Calu3 (cell line): ENCODE measurements at regions of chrX and their contacts with region 1.

Region 1: DNA sequence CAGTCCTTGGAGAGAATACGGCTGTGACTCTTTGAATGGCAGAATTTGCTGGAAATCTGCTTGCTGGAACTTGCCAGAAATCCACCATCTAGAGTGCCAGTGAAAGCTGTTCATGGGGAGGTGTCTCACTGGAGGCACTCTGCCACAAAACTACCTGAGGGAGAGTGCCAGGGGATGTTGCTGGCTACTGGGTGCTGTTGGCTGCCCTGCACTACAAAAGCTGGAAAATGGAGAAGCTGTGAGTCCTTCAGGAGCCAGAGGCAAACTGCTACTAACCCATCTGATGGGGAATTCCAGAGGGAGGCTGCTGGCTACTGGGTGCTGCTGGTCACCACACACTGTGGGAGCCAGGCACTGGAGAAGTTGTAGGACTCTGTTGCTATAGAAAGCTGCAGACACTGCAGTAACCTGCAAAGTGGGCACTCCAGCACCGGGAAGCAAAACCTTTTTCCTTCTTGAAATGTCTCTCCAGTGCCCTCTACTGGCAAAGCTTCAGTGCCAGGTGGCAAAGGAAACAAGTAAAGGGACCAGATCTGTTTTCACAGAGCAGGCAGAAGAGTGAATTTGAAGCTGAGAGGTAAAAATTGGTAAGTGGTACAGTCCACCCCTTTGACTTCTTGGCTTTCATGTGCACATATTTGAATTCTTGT is 47.8 kb upstream of the HSD17B10 start:
- DNase-seq: peak; percentile 68
- H3K4me3 Mint-ChIP-seq: no peak overlapping the region
- H3K27ac Mint-ChIP-seq: no peak overlapping the region
- H3K4me1 Mint-ChIP-seq: peaks cover 11% of the 10 kb centered on the region
- H3K27me3 Mint-ChIP-seq: peaks cover 31% of the 10 kb centered on the region
- CTCF ChIP-seq: no peak

Region 2: DNA sequence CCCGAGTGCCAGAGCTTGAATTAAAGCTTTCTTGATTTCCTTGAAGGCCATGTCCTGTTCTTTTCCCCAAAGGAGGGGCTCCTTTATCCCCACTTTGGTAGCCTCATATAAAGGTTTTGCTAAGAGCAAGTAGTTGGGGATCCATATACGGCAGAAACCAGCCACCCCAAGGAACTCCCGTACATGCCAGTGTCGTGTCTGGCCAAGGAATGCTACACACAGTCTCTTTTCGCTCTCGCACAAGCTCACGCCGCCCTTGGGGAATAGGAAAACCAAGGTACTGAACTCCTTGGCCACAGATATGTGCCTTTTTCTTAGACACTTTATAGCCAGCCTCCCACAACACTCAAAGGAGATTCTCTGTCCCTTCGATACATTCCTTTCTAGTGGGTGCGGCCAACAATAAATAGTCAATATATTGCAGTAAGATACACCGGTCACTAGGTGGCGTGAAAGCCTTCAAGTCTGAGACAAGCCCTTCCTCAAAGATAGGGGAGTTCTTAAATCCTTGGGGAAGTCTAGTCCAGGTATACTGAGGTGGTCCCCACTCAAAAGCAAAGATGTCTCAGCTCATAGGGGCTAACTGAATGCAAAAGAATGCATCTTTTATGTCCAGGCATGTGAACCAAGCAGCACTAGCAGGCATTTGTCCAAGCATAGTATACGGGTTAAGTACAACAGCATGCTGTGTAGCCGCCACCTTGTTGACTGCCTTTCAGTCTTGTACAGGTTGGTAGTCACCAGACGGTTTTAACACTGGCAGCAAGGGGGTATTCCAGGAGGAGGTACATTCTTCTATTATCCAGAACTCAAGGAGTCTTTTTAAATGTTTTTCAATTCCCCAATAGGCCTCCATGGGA is 907.3 kb before region 1 on chrX:
- CTCF ChIA-PET with region 1: no interaction called
- intact Hi-C with region 1: no loop called
- DNase-seq: peak; percentile 46
- H3K4me3 Mint-ChIP-seq: peak overlapping the region; percentile 31
- H3K27ac Mint-ChIP-seq: no peak overlapping the region
- H3K4me1 Mint-ChIP-seq: peaks cover 15% of the 10 kb centered on the region
- H3K27me3 Mint-ChIP-seq: peaks cover 48% of the 10 kb centered on the region
- CTCF ChIP-seq: peak; percentile 31

Region 3: DNA sequence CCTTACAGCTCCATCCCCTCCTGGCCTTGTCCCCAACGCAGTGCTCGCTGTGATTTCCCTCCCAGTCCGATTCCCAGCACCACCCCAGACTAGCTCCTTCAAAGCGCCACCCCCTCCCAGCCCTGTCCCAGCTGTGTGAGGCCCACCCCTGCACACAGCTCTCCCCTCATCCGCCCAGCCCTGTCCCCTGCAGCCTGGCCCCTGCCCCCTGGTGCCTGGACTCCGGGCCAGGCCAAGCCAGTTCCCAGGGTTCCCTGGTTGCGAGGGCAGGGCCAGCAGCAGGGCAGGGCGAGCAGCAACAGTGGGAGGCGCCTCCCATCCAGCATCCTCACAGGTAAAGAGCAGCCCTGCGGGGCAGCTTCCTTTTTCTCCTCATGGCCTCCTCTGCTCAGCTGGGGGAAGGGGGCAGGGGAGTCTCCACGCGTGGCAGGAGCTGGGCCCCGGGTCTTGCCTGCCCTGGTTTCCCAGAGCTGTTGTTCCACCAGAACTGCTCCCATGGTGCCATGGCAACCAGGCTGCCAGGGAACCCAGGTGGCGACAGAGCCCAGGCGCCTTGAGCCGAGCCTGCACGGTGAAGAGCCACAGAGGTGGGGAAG is 225.4 kb before region 1 on chrX:
- CTCF ChIA-PET with region 1: no interaction called
- intact Hi-C with region 1: no loop called
- DNase-seq: no peak
- H3K4me3 Mint-ChIP-seq: no peak overlapping the region
- H3K27ac Mint-ChIP-seq: no peak overlapping the region
- H3K4me1 Mint-ChIP-seq: peaks cover 6% of the 10 kb centered on the region
- H3K27me3 Mint-ChIP-seq: no peaks in the 10 kb centered on the region
- CTCF ChIP-seq: no peak

Region 4: DNA sequence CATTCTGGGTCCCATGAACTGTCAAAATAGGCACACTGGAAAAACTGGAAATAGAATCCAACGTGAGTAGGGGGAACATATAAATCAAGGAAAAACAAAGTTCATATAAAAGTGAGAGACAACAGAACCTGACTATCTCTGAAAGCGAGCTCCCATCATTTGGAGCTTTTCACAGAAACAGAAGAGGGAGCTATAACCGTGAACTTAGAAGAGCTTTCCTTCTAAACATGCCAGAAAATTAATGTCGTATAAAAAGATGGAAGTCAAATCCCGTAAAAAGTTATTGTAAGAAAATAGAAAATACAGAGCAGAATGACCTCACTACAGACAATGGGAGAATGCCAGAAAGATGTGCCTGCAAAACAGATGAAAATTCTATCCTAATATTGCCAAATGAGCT is 23.9 kb before region 1 on chrX:
- CTCF ChIA-PET with region 1: interaction called, 13 read pairs
- intact Hi-C with region 1: no loop called
- DNase-seq: no peak
- H3K4me3 Mint-ChIP-seq: no peak overlapping the region
- H3K27ac Mint-ChIP-seq: no peak overlapping the region
- H3K4me1 Mint-ChIP-seq: peaks cover 12% of the 10 kb centered on the region
- H3K27me3 Mint-ChIP-seq: peaks cover 43% of the 10 kb centered on the region
- CTCF ChIP-seq: no peak